ENCODE measurements at regions of chr10 and their contacts with region 1.

Region 1: DNA sequence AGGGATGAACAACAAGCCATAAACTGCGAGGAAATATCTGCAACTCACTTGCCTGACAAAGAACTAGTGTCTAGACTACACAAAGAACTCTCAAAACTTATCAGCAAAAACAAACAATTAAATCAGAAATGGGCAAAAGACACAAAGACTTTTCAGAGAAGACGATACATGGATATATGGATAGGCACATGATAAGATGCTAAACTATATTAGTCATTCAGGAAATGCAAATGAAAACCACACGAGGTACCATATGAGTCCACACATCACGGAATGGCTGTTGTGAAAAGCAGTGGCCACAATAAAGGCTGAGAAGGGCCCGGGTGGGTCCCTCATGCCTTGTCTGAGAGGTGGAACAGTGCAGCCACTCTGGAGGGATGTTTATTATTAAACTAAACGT is 267.8 kb downstream of the WDR37 start:
- DNase-seq: no peak
- ATAC-seq: no peak
- H3K4me3 ChIP-seq: no peak overlapping the region
- H3K27ac ChIP-seq: no peak overlapping the region
- H3K4me1 ChIP-seq: no peaks in the 10 kb centered on the region
- H3K27me3 ChIP-seq: peaks cover 0 to 29% (median 11%) of the 10 kb centered on the region in 7 donors
- CTCF ChIP-seq: no peak

Region 2: GRCh38 chr10:1354809-1355710 is 31.1 kb after region 1 on chr10:
- intact Hi-C with region 1: loop called in 1 of 10 experiments (anchors 2 kb)
- DNase-seq: no peak
- ATAC-seq: no peak
- H3K4me3 ChIP-seq: no peak overlapping the region
- H3K27ac ChIP-seq: no peak overlapping the region
- H3K4me1 ChIP-seq: no peaks in the 10 kb centered on the region
- H3K27me3 ChIP-seq: peaks cover 0 to 43% (median 22%) of the 10 kb centered on the region in 7 donors
- CTCF ChIP-seq: no peak